Mammary epithelial cell (primary cell): ENCODE measurements at regions of chr9 and their contacts with region 1.

Region 1: GRCh38 chr9:111161015-111161415 is 122.7 kb upstream of the LPAR1 start:
- DNase-seq: peak; percentile 35
- H3K4me3 ChIP-seq: no peak overlapping the region
- H3K27ac ChIP-seq: no peak overlapping the region
- H3K4me1 ChIP-seq: no peaks in the 10 kb centered on the region
- H3K27me3 ChIP-seq: peaks cover 8% of the 10 kb centered on the region
- CTCF ChIP-seq: no peak

Region 2: DNA sequence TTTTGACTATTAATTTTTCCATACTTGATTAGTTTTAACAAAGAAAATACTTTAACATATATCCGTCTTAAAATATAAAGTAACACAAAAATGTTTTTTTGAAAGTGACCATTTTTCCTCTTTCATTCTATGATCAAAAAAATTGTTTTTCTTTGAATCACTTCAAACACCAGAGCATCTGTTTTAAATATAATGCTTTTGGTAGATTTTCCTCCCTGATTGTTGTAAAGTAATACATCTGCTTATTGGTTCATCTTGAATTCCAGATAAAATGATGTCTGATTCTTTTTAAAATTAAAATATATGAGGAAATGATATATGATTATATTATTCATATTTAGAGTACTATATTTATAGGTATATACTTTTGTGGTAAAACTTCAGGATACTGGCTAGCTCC is 46.5 kb before region 1 on chr9:
- CTCF ChIA-PET with region 1: no interaction called
- dilution Hi-C with region 1: loop called (anchors 5 kb)
- in situ Hi-C with region 1: no loop called
- intact Hi-C with region 1: no loop called
- DNase-seq: no peak
- H3K4me3 ChIP-seq: no peak overlapping the region
- H3K27ac ChIP-seq: no peak overlapping the region
- H3K4me1 ChIP-seq: no peaks in the 10 kb centered on the region
- H3K27me3 ChIP-seq: no peaks in the 10 kb centered on the region
- CTCF ChIP-seq: no peak

Region 3: GRCh38 chr9:111236332-111236731 is 75.3 kb after region 1 on chr9:
- CTCF ChIA-PET with region 1: no interaction called
- dilution Hi-C with region 1: loop called (anchors 5 kb)
- in situ Hi-C with region 1: no loop called
- intact Hi-C with region 1: no loop called
- DNase-seq: no peak
- H3K4me3 ChIP-seq: no peak overlapping the region
- H3K27ac ChIP-seq: no peak overlapping the region
- H3K4me1 ChIP-seq: no peaks in the 10 kb centered on the region
- H3K27me3 ChIP-seq: no peaks in the 10 kb centered on the region
- CTCF ChIP-seq: no peak

Region 4: DNA sequence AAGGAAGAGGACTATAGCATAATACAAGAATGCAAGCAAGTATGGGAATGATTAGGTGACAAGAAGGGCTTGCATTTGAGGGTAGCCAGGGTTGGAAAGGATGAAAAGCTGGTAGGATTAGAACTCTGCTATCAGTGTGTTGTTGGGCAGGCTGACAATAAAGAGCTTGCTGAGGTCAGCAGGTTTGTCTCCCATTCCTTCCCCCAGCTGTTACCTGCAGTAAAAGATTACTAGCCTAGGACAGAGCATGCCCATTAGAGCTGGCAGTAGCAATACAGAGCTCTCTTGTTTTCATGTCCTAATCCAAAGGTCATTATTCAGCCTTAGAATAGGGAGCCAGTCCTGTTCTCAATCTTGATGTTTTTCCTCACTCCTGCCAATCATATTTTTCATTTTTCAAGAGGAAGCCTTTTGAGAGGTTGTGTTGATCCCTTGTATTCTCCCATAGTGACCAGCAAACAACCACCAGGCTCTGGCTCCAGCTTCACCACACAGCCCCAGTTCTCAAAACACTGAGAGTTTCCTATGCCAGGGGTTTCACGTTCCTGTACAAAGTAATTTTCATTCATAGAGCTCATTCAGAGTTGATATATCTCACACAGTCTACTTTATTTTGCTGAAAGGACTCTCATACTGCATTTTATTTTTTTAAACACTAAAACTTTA is 97.3 kb after region 1 on chr9:
- CTCF ChIA-PET with region 1: no interaction called
- dilution Hi-C with region 1: no loop called
- in situ Hi-C with region 1: no loop called
- intact Hi-C with region 1: no loop called
- DNase-seq: no peak
- H3K4me3 ChIP-seq: no peak overlapping the region
- H3K27ac ChIP-seq: no peak overlapping the region
- H3K4me1 ChIP-seq: no peaks in the 10 kb centered on the region
- H3K27me3 ChIP-seq: peaks cover 6% of the 10 kb centered on the region
- CTCF ChIP-seq: no peak